ENCODE measurements at regions of chr7 and their contacts with region 1.

Region 1: DNA sequence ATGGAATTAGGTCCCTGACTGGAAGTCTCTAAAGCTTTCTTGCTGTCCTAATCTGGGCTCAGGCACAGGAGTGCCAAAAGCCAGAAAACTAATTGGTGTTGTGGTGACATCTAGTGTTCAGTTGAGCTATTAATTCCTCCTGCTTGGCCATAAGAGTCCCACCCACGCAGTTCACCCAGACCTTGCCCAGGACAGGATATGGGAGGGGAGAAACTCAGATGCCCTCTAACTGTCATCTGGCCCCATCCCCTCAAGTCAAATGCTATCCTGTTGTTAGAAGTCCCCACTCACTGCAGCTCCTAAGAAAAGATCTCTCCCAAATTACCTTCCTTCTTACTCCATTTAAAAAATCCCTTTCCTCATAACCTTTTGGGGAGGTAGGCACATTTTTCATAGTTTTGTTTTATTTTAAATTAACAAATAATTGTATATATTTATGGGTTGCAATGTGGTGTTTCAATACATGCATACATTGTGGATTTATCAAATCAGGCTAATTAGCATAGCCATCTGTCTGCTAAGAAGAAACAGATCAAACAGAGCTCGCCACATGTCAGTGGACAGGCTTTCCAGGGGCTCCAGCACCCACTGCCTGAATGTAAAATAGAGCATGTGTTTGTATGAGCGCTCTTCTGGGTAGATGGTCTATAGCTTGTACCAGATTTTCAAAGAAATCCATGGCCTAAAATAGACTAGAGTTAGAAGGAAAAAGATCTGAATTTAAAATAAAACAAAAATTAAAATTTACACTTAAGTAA is 84.0 kb downstream of the GSAP start:
- DNase-seq: peak in 4 of 5 donors; percentile 66 to 74 (median 70)
- ATAC-seq: peak; percentile 71 to 95 (median 93)
- H3K4me3 ChIP-seq: no peak overlapping the region
- H3K27ac ChIP-seq: no peak overlapping the region
- H3K4me1 ChIP-seq: peaks cover 5 to 65% (median 36%) of the 10 kb centered on the region in 12 donors
- H3K27me3 ChIP-seq: no peaks in the 10 kb centered on the region
- CTCF ChIP-seq: peak; percentile 59 to 81 (median 76)
- POLR2A ChIP-seq: no peak

Region 2: GRCh38 chr7:77247206-77247850 is 84.8 kb before region 1 on chr7:
- intact Hi-C with region 1: loop called in 8 of 10 experiments (anchors 2 to 5 kb)
- DNase-seq: peak; percentile 43 to 76 (median 72)
- ATAC-seq: peak in 3 of 4 donors; percentile 48 to 63 (median 60)
- H3K4me3 ChIP-seq: no peak overlapping the region
- H3K27ac ChIP-seq: no peak overlapping the region
- H3K4me1 ChIP-seq: peaks cover 0 to 38% (median 12%) of the 10 kb centered on the region in 12 donors
- H3K27me3 ChIP-seq: peaks cover 0 to 6% (median 0%) of the 10 kb centered on the region in 9 donors
- CTCF ChIP-seq: peak; percentile 62 to 89 (median 78)
- POLR2A ChIP-seq: no peak

Region 3: GRCh38 chr7:77293046-77293445 is 39.1 kb before region 1 on chr7:
- intact Hi-C with region 1: no loop called
- DNase-seq: no peak
- ATAC-seq: no peak
- H3K4me3 ChIP-seq: no peak overlapping the region
- H3K27ac ChIP-seq: no peak overlapping the region
- H3K4me1 ChIP-seq: no peaks in the 10 kb centered on the region
- H3K27me3 ChIP-seq: no peaks in the 10 kb centered on the region
- CTCF ChIP-seq: peak in 1 of 12 donors; percentile 5
- POLR2A ChIP-seq: no peak

Region 4: GRCh38 chr7:77455324-77455723 is 123.2 kb after region 1 on chr7:
- intact Hi-C with region 1: no loop called
- DNase-seq: peak in 4 of 5 donors; percentile 35 to 84 (median 73)
- ATAC-seq: peak; percentile 60 to 96 (median 82)
- H3K4me3 ChIP-seq: no peak overlapping the region
- H3K27ac ChIP-seq: no peak overlapping the region
- H3K4me1 ChIP-seq: peaks cover 0 to 53% (median 9%) of the 10 kb centered on the region in 12 donors
- H3K27me3 ChIP-seq: no peaks in the 10 kb centered on the region
- CTCF ChIP-seq: no peak
- POLR2A ChIP-seq: no peak

Measured in heart left ventricle (tissue), 16 donors.